ENCODE measurements at regions of chr19 and their contacts with region 1.

Region 1: GRCh38 chr19:48724796-48725753 is 5.5 kb upstream of the MAMSTR start:
- DNase-seq: peak; percentile 93 to 97 (median 96)
- H3K4me3 ChIP-seq: peak overlapping the region in 3 of 7 experiments; percentile 14 to 38 (median 19)
- H3K27ac ChIP-seq: peak overlapping the region in 1 of 2 experiments; percentile 73
- H3K4me1 ChIP-seq: peaks cover 0 to 28% (median 18%) of the 10 kb centered on the region in 4 experiments
- H3K27me3 ChIP-seq: no peaks in the 10 kb centered on the region

Region 2: GRCh38 chr19:48713864-48714758 is 11.0 kb before region 1 on chr19:
- CTCF ChIA-PET with region 1: interaction called, 17 read pairs
- POLR2A ChIA-PET with region 1: interaction called, 3 read pairs
- DNase-seq: peak; percentile 100
- H3K4me3 ChIP-seq: peak overlapping the region; percentile 69 to 92 (median 76)
- H3K27ac ChIP-seq: peak overlapping the region; percentile 54 to 84
- H3K4me1 ChIP-seq: peaks cover 0 to 21% (median 19%) of the 10 kb centered on the region in 4 experiments
- H3K27me3 ChIP-seq: no peaks in the 10 kb centered on the region

Region 3: DNA sequence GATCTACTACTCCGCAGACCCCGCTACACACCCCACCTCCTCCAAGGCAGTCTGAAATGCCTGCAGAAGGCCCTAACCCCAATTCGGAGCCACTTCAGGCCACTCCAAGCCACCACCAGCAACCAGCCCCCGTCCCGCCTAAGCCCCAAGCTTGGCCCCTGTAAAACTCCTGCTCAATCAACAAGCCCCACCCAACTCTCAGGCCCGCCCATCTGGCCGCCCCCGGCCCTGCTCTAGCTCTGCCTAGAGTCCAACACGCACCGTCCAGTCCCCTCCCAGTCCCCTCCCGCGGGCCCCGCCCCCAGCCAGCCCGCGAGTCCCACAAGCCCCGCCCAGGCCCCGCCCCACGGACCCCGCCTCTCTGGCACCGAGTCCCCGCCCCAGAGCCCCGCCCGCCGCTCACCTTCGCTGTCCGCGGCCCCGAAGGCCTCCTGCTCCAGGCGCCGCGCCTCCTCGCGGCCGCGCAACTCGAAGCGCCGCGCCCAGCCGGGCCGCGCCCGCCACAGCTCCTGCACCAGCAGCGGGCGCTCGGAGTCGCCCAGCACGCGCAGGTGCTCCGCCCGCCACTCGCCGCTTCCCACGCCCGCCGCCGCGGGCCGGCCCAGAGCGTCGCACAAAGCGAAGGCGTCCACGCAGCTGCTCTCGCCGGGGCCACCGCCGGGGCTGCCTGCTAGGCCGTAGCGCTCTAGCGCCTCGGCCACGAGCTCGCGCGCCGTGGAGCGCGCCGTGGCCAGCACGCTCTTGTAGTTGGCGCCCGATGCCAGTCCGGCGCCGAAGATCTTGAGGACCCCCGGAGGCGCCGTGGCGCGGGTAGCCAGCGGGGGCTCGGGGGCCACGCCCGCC is 13.7 kb after region 1 on chr19:
- CTCF ChIA-PET with region 1: interaction called, 16 read pairs
- POLR2A ChIA-PET with region 1: interaction called, 6 read pairs
- DNase-seq: peak; percentile 87 to 90 (median 88)
- H3K4me3 ChIP-seq: peak overlapping the region in 6 of 7 experiments; percentile 28 to 72 (median 60)
- H3K27ac ChIP-seq: peak overlapping the region in 1 of 2 experiments; percentile 69
- H3K4me1 ChIP-seq: peaks cover 0 to 34% (median 31%) of the 10 kb centered on the region in 4 experiments
- H3K27me3 ChIP-seq: peaks cover 0 to 20% (median 12%) of the 10 kb centered on the region in 5 experiments

Region 4: GRCh38 chr19:48752498-48753365 is 27.7 kb after region 1 on chr19 and contains the start of gene FUT1:
- CTCF ChIA-PET with region 1: no interaction called
- POLR2A ChIA-PET with region 1: no interaction called
- DNase-seq: peak in 1 of 3 donors; percentile 46
- H3K4me3 ChIP-seq: peak within 1 kb of the TSS; percentile 9 to 81 (median 55)
- H3K27ac ChIP-seq: no peak within 1 kb of the TSS
- H3K4me1 ChIP-seq: peaks cover 0 to 25% (median 20%) of the 10 kb centered on the region in 4 experiments
- H3K27me3 ChIP-seq: peaks cover 0 to 22% (median 11%) of the 10 kb centered on the region in 5 experiments